Mammary epithelial cell (primary cell): ENCODE measurements at regions of chr1 and their contacts with region 1.

Region 1: GRCh38 chr1:19563324-19564097 is 78.2 kb upstream of the CAPZB start:
- DNase-seq: peak; percentile 29
- H3K4me3 ChIP-seq: no peak overlapping the region
- H3K27ac ChIP-seq: no peak overlapping the region
- H3K4me1 ChIP-seq: peaks cover 2% of the 10 kb centered on the region
- H3K27me3 ChIP-seq: no peaks in the 10 kb centered on the region
- CTCF ChIP-seq: no peak

Region 2: DNA sequence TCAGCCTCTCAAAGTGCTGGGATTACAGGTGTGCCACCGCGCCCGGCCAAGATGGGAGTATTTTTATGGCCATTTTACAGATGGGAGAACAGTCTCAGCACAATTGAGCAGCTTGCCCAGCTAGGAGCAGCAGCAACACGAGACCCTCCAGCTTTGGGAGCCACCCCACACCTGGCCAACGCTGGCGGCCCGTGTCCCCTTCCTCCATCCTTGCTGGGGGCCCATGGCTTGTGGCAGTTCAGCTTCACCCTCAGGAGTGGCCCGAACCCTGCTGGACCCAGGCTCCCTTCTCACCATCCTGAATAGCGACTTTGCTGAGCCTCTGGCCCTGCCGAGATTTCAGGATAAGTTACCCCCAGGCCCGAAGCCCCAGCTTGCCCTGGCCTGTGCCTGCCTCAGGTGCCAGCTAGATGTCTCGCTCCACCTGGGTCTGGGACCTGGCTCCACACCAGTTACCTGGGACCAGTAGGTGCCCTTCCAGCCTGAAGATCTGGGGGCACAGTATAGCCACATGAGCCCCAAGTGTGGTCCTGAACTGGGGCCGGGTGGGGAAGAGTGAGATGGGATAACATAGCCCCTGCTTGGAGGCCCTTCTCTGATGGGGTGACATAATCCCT is 232.1 kb before region 1 on chr1:
- CTCF ChIA-PET with region 1: interaction called, 16 read pairs
- dilution Hi-C with region 1: no loop called
- in situ Hi-C with region 1: no loop called
- intact Hi-C with region 1: no loop called
- DNase-seq: no peak
- H3K4me3 ChIP-seq: no peak overlapping the region
- H3K27ac ChIP-seq: no peak overlapping the region
- H3K4me1 ChIP-seq: peaks cover under 1% of the 10 kb centered on the region
- H3K27me3 ChIP-seq: no peaks in the 10 kb centered on the region
- CTCF ChIP-seq: no peak